ENCODE measurements at regions of chr15 and their contacts with region 1.

Region 1: GRCh38 chr15:39887832-39888231 is 32.2 kb downstream of the GPR176 start:
- DNase-seq: peak; percentile 65
- H3K4me3 Mint-ChIP-seq: no peak overlapping the region
- H3K27ac Mint-ChIP-seq: peak overlapping the region; percentile 85
- H3K4me1 Mint-ChIP-seq: peaks cover 16% of the 10 kb centered on the region
- H3K27me3 Mint-ChIP-seq: no peaks in the 10 kb centered on the region
- CTCF ChIP-seq: peak; percentile 36

Region 2: GRCh38 chr15:39127925-39128617 is 759.8 kb before region 1 on chr15:
- CTCF ChIA-PET with region 1: no interaction called
- POLR2A ChIA-PET with region 1: no interaction called
- intact Hi-C with region 1: no loop called
- DNase-seq: peak; percentile 80
- H3K4me3 Mint-ChIP-seq: no peak overlapping the region
- H3K27ac Mint-ChIP-seq: peak overlapping the region; percentile 81
- H3K4me1 Mint-ChIP-seq: peaks cover 26% of the 10 kb centered on the region
- H3K27me3 Mint-ChIP-seq: no peaks in the 10 kb centered on the region
- CTCF ChIP-seq: no peak

Region 3: DNA sequence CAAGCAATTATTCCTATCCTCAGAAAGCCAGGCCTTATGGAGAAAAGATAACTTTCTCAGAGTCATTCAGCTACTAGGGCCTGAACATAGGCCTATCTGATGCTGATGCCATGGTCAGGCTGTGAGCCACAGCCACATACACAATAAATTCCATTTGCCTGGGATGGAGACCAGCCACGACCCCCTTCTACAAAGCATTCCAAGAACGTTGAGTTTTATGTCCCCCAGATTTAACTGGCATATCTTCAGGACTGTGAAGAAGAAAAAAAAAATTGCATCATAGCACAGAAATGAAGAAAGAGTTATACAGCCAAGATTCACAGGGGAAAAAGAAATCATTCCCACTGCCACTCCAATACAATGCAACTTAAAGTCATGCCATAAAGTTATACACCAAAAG is 207.0 kb before region 1 on chr15:
- CTCF ChIA-PET with region 1: no interaction called
- POLR2A ChIA-PET with region 1: no interaction called
- intact Hi-C with region 1: no loop called
- DNase-seq: no peak
- H3K4me3 Mint-ChIP-seq: no peak overlapping the region
- H3K27ac Mint-ChIP-seq: no peak overlapping the region
- H3K4me1 Mint-ChIP-seq: no peaks in the 10 kb centered on the region
- H3K27me3 Mint-ChIP-seq: no peaks in the 10 kb centered on the region
- CTCF ChIP-seq: no peak

Region 4: DNA sequence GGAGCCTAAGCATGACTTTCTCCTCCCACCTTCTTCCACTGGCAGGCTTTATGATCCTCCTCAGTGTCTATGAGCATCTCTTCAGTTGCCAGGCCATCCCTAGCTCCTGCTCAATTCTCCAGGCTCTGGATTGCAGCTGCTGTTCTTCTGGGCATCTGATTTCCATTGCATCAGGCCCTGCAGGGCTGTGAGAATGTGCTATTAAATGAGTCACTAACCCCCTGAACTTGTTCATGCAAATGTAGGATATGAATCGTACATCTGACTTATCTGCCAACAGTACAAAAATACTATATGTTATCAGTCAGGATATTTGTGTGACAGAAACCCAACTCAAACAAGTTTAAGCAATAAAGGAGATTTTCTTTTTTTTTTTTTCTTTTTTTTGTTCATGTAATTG is 20.4 kb after region 1 on chr15:
- CTCF ChIA-PET with region 1: interaction called, 18 read pairs
- POLR2A ChIA-PET with region 1: interaction called, 3 read pairs
- intact Hi-C with region 1: no loop called
- DNase-seq: peak; percentile 74
- H3K4me3 Mint-ChIP-seq: no peak overlapping the region
- H3K27ac Mint-ChIP-seq: no peak overlapping the region
- H3K4me1 Mint-ChIP-seq: peaks cover 11% of the 10 kb centered on the region
- H3K27me3 Mint-ChIP-seq: no peaks in the 10 kb centered on the region
- CTCF ChIP-seq: no peak

Region 5: GRCh38 chr15:40002295-40002694 is 114.5 kb after region 1 on chr15:
- CTCF ChIA-PET with region 1: interaction called, 3 read pairs
- POLR2A ChIA-PET with region 1: no interaction called
- intact Hi-C with region 1: loop called (anchors 10 kb)
- DNase-seq: peak; percentile 6
- H3K4me3 Mint-ChIP-seq: no peak overlapping the region
- H3K27ac Mint-ChIP-seq: no peak overlapping the region
- H3K4me1 Mint-ChIP-seq: peaks cover 5% of the 10 kb centered on the region
- H3K27me3 Mint-ChIP-seq: no peaks in the 10 kb centered on the region
- CTCF ChIP-seq: no peak

Region 6: GRCh38 chr15:40038638-40039543 is 151.1 kb after region 1 on chr15 and contains the start of gene SRP14:
- CTCF ChIA-PET with region 1: interaction called, 9 read pairs
- POLR2A ChIA-PET with region 1: interaction called, 4 read pairs
- intact Hi-C with region 1: loop called (anchors 5 kb)
- DNase-seq: peak; percentile 93
- H3K4me3 Mint-ChIP-seq: peak within 1 kb of the TSS; percentile 92
- H3K27ac Mint-ChIP-seq: peak within 1 kb of the TSS; percentile 97
- H3K4me1 Mint-ChIP-seq: peaks cover 9% of the 10 kb centered on the region
- H3K27me3 Mint-ChIP-seq: no peaks in the 10 kb centered on the region
- CTCF ChIP-seq: no peak
- total RNA-seq, gene SRP14: 165 and 203 TPM in 2 replicates

Region 7: GRCh38 chr15:40092256-40092978 is 204.6 kb after region 1 on chr15:
- CTCF ChIA-PET with region 1: no interaction called
- POLR2A ChIA-PET with region 1: no interaction called
- intact Hi-C with region 1: no loop called
- DNase-seq: no peak
- H3K4me3 Mint-ChIP-seq: no peak overlapping the region
- H3K27ac Mint-ChIP-seq: no peak overlapping the region
- H3K4me1 Mint-ChIP-seq: peaks cover 16% of the 10 kb centered on the region
- H3K27me3 Mint-ChIP-seq: no peaks in the 10 kb centered on the region
- CTCF ChIP-seq: no peak